Activated T-helper 2 cell treated with anti-CD3 and anti-CD28 coated beads, Interferon-gamma antibody, Interleukin-2, Interleukin-4, amounts not matched to agents 10 μg/mL and 5 μg/mL and 100 μg/mL, durations not matched to agents 14 hours and 24 hours and 36 hours (primary cell): ENCODE measurements at regions of chr3 and their contacts with region 1.

Region 1: GRCh38 chr3:101518421-101518871 is 5.4 kb upstream of the SENP7 start:
- DNase-seq: peak; percentile 55
- H3K4me3 Mint-ChIP-seq: peak overlapping the region; percentile 53
- H3K27ac Mint-ChIP-seq: peak overlapping the region; percentile 85
- H3K4me1 Mint-ChIP-seq: peaks cover 39% of the 10 kb centered on the region
- H3K27me3 Mint-ChIP-seq: no peaks in the 10 kb centered on the region

Region 2: DNA sequence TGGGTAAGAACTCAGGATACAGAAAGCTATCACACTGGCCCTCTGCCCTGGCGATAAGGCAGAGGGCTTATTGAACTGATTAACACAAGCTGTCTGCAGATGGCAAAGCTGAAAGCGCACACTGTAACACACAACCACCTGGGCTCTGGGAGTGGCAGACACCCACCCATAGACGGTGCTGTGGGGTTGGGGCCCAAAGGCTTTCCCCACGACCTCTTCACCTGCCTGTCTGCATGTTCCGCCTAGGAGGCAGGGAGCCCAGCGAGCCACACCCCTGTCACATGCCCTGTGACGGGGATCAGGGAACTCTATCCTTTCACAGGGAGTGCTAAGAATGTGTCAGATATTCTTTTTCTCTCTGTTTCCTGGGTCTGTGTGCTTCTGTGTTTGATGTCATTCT is 821.3 kb before region 1 on chr3:
- intact Hi-C with region 1: no loop called
- DNase-seq: no peak
- H3K4me3 Mint-ChIP-seq: no peak overlapping the region
- H3K27ac Mint-ChIP-seq: no peak overlapping the region
- H3K4me1 Mint-ChIP-seq: peaks cover 2% of the 10 kb centered on the region
- H3K27me3 Mint-ChIP-seq: peaks cover 64% of the 10 kb centered on the region

Region 3: GRCh38 chr3:101119535-101119934 is 398.9 kb before region 1 on chr3:
- intact Hi-C with region 1: no loop called
- DNase-seq: no peak
- H3K4me3 Mint-ChIP-seq: no peak overlapping the region
- H3K27ac Mint-ChIP-seq: no peak overlapping the region
- H3K4me1 Mint-ChIP-seq: peaks cover 4% of the 10 kb centered on the region
- H3K27me3 Mint-ChIP-seq: peaks cover 5% of the 10 kb centered on the region

Region 4: GRCh38 chr3:101544161-101544850 is 25.9 kb after region 1 on chr3:
- intact Hi-C with region 1: loop called (anchors 1 kb)
- DNase-seq: no peak
- H3K4me3 Mint-ChIP-seq: peak overlapping the region; percentile 2
- H3K27ac Mint-ChIP-seq: peak overlapping the region; percentile 27
- H3K4me1 Mint-ChIP-seq: peaks cover 34% of the 10 kb centered on the region
- H3K27me3 Mint-ChIP-seq: peaks cover 4% of the 10 kb centered on the region

Region 5: GRCh38 chr3:101567528-101568317 is 49.3 kb after region 1 on chr3:
- intact Hi-C with region 1: loop called (anchors 1 kb)
- DNase-seq: no peak
- H3K4me3 Mint-ChIP-seq: peak overlapping the region; percentile 54
- H3K27ac Mint-ChIP-seq: peak overlapping the region; percentile 93
- H3K4me1 Mint-ChIP-seq: peaks cover 59% of the 10 kb centered on the region
- H3K27me3 Mint-ChIP-seq: no peaks in the 10 kb centered on the region